ENCODE measurements at regions of chr7 and their contacts with region 1.

Region 1: GRCh38 chr7:17298207-17298839 is at the start of gene AHR:
- DNase-seq: peak; percentile 89
- H3K4me3 ChIP-seq: peak within 1 kb of the TSS; percentile 62 to 97 (median 90)
- H3K27ac ChIP-seq: peak within 1 kb of the TSS; percentile 56
- H3K4me1 ChIP-seq: peaks cover 29% of the 10 kb centered on the region
- H3K27me3 ChIP-seq: no peaks in the 10 kb centered on the region
- CTCF ChIP-seq: no peak
- POLR2A ChIP-seq: peak; percentile 65
- total RNA-seq, gene AHR: 29.3 and 31.8 TPM in 2 replicates

Region 2: DNA sequence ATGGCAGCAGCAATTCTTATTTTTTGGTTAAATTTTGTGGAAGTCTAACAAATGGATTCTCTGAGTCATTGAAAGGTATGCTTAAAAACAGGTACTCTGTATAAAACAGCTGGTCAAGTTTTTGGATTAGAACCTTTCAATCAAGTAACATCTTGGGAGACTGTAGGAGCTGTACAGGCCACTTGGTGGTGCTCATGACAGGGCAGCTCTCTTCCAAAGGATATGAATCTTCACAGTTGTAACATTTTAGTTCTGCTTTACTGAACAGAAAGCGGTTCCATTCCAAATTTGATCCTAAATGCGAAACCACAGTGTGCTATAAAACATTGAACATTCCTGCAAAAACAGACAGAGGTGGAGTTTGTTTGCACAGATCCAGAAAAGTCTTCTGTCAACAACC is 372.0 kb before region 1 on chr7:
- CTCF ChIA-PET with region 1: interaction called, 73 read pairs
- POLR2A ChIA-PET with region 1: no interaction called
- dilution Hi-C with region 1: no loop called
- intact Hi-C with region 1: loop called (anchors 1 kb)
- DNase-seq: peak; percentile 68
- H3K4me3 ChIP-seq: no peak overlapping the region
- H3K27ac ChIP-seq: no peak overlapping the region
- H3K4me1 ChIP-seq: peaks cover 7% of the 10 kb centered on the region
- H3K27me3 ChIP-seq: no peaks in the 10 kb centered on the region
- CTCF ChIP-seq: peak; percentile 53 to 68
- POLR2A ChIP-seq: no peak

Region 3: DNA sequence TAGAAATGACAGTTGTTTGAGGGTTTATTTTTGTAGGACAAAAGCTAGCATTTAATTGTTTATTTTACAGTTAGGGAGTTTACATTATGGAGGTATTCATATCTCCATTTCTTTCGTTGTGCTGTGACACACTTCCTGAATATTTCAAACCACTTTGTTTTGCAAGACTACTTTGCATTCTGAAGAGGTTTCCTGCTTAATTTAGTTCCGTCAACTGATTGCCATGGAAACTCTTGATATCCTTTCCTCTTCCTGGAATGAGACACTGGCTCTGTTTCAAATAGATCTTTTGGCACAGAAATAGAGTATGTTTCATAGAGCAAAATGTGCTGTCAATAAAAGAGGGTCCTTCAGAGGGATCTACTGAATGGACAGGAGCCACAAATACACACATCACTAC is 257.0 kb before region 1 on chr7:
- CTCF ChIA-PET with region 1: interaction called, 6 read pairs
- POLR2A ChIA-PET with region 1: no interaction called
- dilution Hi-C with region 1: no loop called
- intact Hi-C with region 1: loop called (anchors 1 kb)
- DNase-seq: peak; percentile 94
- H3K4me3 ChIP-seq: peak overlapping the region in 1 of 3 experiments; percentile 30
- H3K27ac ChIP-seq: peak overlapping the region; percentile 88
- H3K4me1 ChIP-seq: peaks cover 52% of the 10 kb centered on the region
- H3K27me3 ChIP-seq: no peaks in the 10 kb centered on the region
- CTCF ChIP-seq: no peak
- POLR2A ChIP-seq: no peak

Region 4: DNA sequence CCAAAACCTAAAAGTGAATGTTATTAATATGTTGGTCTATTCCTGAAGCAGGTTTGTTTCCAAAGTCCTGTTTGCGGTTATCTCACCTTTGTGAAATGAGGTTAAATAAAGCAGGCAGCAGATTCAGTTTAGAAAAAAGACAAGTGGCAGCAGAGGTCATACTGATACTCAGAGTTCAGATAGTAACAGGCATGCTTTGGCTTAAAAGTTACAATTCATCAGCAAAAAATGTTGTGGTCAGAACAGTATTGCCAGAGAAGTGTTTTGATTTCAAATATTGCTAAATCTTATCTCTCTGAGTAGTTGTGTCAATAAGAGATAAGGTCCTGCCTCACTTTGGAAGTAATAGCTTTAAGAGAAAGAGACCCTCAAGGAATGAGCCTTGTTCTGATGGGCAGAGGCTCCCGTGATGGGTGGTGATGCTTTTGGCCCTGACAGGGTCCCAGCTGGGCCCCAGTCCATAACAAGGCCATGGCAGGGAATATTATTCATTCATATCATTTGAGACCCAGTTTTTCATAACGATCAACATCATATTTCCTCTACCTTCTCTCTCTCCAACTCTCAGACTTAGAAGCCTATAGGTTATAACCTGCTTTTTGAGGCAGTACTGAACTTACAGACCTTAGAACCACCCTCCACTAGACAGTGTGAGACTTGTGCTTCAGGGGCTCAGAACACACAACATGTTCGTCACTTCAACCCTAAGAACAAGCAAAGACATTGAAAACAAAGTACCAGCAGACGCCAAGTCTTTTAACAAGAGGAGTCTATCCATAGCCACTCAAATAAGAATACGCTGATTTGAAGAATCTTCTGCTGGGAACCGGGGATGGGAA is 58.4 kb before region 1 on chr7:
- CTCF ChIA-PET with region 1: interaction called, 10 read pairs
- POLR2A ChIA-PET with region 1: no interaction called
- dilution Hi-C with region 1: no loop called
- intact Hi-C with region 1: no loop called
- DNase-seq: peak; percentile 50
- H3K4me3 ChIP-seq: no peak overlapping the region
- H3K27ac ChIP-seq: no peak overlapping the region
- H3K4me1 ChIP-seq: peaks cover 26% of the 10 kb centered on the region
- H3K27me3 ChIP-seq: no peaks in the 10 kb centered on the region
- CTCF ChIP-seq: no peak
- POLR2A ChIP-seq: peak; percentile 37

Region 5: GRCh38 chr7:17462034-17462695 is 163.8 kb after region 1 on chr7:
- CTCF ChIA-PET with region 1: interaction called, 8 read pairs
- POLR2A ChIA-PET with region 1: no interaction called
- dilution Hi-C with region 1: no loop called
- intact Hi-C with region 1: loop called (anchors 5 kb)
- DNase-seq: no peak
- H3K4me3 ChIP-seq: no peak overlapping the region
- H3K27ac ChIP-seq: no peak overlapping the region
- H3K4me1 ChIP-seq: peaks cover 7% of the 10 kb centered on the region
- H3K27me3 ChIP-seq: no peaks in the 10 kb centered on the region
- CTCF ChIP-seq: no peak
- POLR2A ChIP-seq: no peak

Region 6: DNA sequence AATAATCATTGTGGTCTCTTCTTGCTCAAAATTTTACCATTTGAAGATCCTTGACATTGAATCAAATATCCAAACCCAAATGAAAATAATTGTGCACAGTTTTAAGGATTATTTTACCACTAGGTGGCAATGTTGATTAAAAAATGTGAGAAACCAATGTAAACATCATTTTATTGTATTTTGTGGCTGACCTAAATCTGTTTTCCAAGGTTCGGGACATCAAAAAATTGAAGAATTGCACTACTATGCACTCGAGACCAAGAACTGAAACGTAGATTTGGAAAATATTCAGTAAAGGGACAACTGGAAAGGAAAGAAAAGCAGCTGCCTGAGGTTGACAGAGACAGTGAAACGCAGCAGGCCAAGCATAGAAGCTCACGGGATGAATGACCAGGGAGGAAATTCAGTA is 382.6 kb after region 1 on chr7:
- CTCF ChIA-PET with region 1: interaction called, 51 read pairs
- POLR2A ChIA-PET with region 1: no interaction called
- dilution Hi-C with region 1: no loop called
- intact Hi-C with region 1: loop called (anchors 1 kb)
- DNase-seq: peak; percentile 31
- H3K4me3 ChIP-seq: no peak overlapping the region
- H3K27ac ChIP-seq: no peak overlapping the region
- H3K4me1 ChIP-seq: peaks cover 4% of the 10 kb centered on the region
- H3K27me3 ChIP-seq: no peaks in the 10 kb centered on the region
- CTCF ChIP-seq: peak in 1 of 2 donors; percentile 16
- POLR2A ChIP-seq: no peak

Measured in endothelial cell of umbilical vein (primary cell).